ENCODE measurements at regions of chr7 and their contacts with region 1.

Region 1: GRCh38 chr7:12403287-12404181 is at the start of gene VWDE:
- DNase-seq: peak; percentile 3 to 74 (median 29)
- ATAC-seq: peak; percentile 89
- H3K4me3 ChIP-seq: peak within 1 kb of the TSS; percentile 62
- H3K4me3 Mint-ChIP-seq: peak within 1 kb of the TSS; percentile 80 to 96 (median 88)
- H3K27ac ChIP-seq: peak within 1 kb of the TSS; percentile 38
- H3K27ac Mint-ChIP-seq: peak within 1 kb of the TSS in 6 of 9 donors; percentile 14 to 89 (median 82)
- H3K4me1 ChIP-seq: no peaks in the 10 kb centered on the region
- H3K4me1 Mint-ChIP-seq: peaks cover 11 to 20% (median 16%) of the 10 kb centered on the region in 7 donors
- H3K27me3 ChIP-seq: no peaks in the 10 kb centered on the region
- H3K27me3 Mint-ChIP-seq: peaks cover 14 to 44% (median 25%) of the 10 kb centered on the region in 5 donors
- total RNA-seq, gene VWDE: 1.3 to 4.9 (median 3.9) TPM

Region 2: GRCh38 chr7:12389089-12389700 is 14.3 kb before region 1 on chr7:
- CTCF ChIA-PET with region 1: no interaction called
- POLR2A ChIA-PET with region 1: no interaction called
- intact Hi-C with region 1: loop called in 1 of 2 experiments (anchors 1 kb)
- DNase-seq: peak in 7 of 9 donors; percentile 7 to 47 (median 26)
- ATAC-seq: peak; percentile 81
- H3K4me3 ChIP-seq: no peak overlapping the region
- H3K4me3 Mint-ChIP-seq: no peak overlapping the region
- H3K27ac ChIP-seq: no peak overlapping the region
- H3K27ac Mint-ChIP-seq: no peak overlapping the region
- H3K4me1 ChIP-seq: no peaks in the 10 kb centered on the region
- H3K4me1 Mint-ChIP-seq: no peaks in the 10 kb centered on the region
- H3K27me3 ChIP-seq: no peaks in the 10 kb centered on the region
- H3K27me3 Mint-ChIP-seq: no peaks in the 10 kb centered on the region

Region 3: DNA sequence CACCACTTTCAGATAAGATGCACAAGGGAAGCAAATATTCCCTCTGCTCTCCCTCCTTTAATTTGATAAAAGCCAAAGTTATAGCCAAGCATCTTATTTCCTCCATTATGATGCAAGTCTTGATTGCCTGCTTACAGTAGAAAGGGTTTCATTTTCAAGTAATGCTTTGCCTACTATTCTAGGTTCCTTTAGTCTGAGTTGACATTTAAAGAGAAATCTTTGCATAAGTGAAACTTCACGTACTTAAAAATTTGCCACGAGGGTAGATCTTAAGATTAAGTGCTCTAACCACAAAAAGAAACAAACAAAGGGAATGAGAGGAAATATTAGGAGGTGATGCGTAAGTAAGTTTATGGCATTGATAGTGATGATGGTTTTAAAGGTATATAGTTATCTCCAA is 78.2 kb after region 1 on chr7:
- CTCF ChIA-PET with region 1: no interaction called
- POLR2A ChIA-PET with region 1: no interaction called
- intact Hi-C with region 1: loop called in 1 of 2 experiments (anchors 5 kb)
- DNase-seq: no peak
- ATAC-seq: no peak
- H3K4me3 ChIP-seq: no peak overlapping the region
- H3K4me3 Mint-ChIP-seq: peak overlapping the region in 7 of 10 donors; percentile 8 to 72 (median 54)
- H3K27ac ChIP-seq: no peak overlapping the region
- H3K27ac Mint-ChIP-seq: peak overlapping the region in 2 of 9 donors; percentile 15 to 75
- H3K4me1 ChIP-seq: no peaks in the 10 kb centered on the region
- H3K4me1 Mint-ChIP-seq: peaks cover 0 to 12% (median 6%) of the 10 kb centered on the region in 7 donors
- H3K27me3 ChIP-seq: no peaks in the 10 kb centered on the region
- H3K27me3 Mint-ChIP-seq: peaks cover 0 to 4% (median 0%) of the 10 kb centered on the region in 5 donors

Measured in naive thymus-derived CD4-positive, alpha-beta T cell (primary cell).